Mammary epithelial cell (primary cell): ENCODE measurements at regions of chr20 and their contacts with region 1.

Region 1: DNA sequence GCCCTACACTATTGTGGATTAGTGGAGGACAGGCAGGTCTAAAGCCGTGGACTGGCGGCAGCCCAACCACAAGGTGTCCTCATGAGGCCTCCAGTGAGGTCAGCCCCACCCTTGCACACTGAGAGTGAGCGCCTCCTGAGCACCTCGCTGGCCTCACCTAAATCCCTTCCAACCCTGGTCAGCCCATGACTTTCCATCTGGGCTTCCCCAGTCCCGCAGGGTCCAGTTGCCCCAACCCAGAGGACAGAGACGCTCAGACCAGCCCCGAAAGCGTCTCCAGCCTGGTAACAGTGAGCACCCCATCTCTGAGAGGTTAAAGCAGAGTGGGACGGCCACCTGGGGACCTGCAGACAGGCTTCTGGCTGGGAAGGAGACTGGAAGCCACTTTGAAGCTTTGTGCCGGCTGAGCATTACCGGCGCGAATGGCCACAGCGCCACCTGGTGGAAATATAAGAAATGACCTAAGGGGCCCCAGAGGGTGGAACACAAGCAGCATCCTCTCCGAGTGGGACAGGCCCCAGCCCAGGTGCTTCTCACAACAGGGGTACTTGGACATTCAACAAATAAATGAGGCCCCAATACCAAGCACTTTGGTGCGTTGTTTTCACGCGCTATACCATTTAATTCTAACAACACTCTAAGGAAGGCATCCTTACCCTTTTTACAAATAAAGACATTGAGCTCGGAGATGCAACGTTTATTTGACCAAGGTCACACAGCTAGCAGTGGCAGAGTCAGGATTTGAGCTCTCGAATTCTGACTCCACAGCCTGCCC is 65.7 kb upstream of the TOP1 start:
- DNase-seq: peak; percentile 56
- H3K4me3 ChIP-seq: no peak overlapping the region
- H3K27ac ChIP-seq: no peak overlapping the region
- H3K4me1 ChIP-seq: peaks cover 26% of the 10 kb centered on the region
- H3K27me3 ChIP-seq: no peaks in the 10 kb centered on the region
- CTCF ChIP-seq: peak; percentile 69 to 89

Region 2: GRCh38 chr20:39112178-39112743 is 1850.7 kb before region 1 on chr20:
- CTCF ChIA-PET with region 1: no interaction called
- dilution Hi-C with region 1: no loop called
- in situ Hi-C with region 1: no loop called
- intact Hi-C with region 1: loop called (anchors 5 kb)
- DNase-seq: peak; percentile 4
- H3K4me3 ChIP-seq: no peak overlapping the region
- H3K27ac ChIP-seq: no peak overlapping the region
- H3K4me1 ChIP-seq: no peaks in the 10 kb centered on the region
- H3K27me3 ChIP-seq: no peaks in the 10 kb centered on the region
- CTCF ChIP-seq: peak; percentile 52 to 70

Region 3: DNA sequence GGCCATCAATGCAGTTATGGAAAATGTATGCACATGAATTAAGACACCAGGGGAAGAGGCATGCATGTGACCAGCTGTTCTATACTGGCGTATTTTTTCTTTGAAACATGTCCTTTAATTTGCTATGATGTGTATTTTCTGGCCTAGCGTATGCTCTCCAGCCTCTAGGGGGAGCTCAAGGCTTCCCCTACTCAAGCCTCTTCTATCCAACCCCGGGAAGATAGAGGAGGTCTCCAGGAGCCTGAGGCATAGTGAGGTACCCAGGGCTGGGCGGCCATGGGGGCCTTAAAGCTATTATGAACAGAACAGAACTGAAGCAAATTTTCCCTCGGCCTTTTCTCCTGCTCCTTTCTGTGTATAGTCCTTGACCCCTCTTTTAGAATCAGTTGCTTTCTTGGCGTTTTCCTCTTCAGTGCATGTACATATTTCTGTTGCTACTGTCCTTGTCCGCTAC is 802.8 kb before region 1 on chr20:
- CTCF ChIA-PET with region 1: no interaction called
- dilution Hi-C with region 1: no loop called
- in situ Hi-C with region 1: no loop called
- intact Hi-C with region 1: loop called (anchors 1 kb)
- DNase-seq: peak; percentile 41
- H3K4me3 ChIP-seq: no peak overlapping the region
- H3K27ac ChIP-seq: no peak overlapping the region
- H3K4me1 ChIP-seq: no peaks in the 10 kb centered on the region
- H3K27me3 ChIP-seq: no peaks in the 10 kb centered on the region
- CTCF ChIP-seq: peak; percentile 90 to 93

Region 4: DNA sequence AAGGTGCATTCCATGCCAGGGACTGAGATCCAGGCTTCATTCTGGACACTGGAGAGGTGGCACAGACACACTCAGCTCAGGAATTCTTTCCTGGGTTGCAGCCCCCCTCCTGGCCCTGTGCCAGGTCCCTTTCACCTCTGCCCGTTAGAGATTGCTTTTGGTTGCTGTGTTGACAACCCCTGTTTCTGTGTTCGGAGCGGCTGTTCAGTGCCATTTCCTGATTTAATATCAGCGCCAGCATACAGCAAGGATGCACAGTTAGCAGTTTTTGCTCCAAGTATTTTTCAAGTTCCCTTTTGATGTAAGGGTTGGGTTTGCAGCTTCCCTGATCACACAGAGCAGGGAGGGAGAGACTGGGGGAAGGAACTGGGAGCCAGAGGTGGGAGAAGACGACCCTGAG is 265.4 kb before region 1 on chr20:
- CTCF ChIA-PET with region 1: no interaction called
- dilution Hi-C with region 1: no loop called
- in situ Hi-C with region 1: no loop called
- intact Hi-C with region 1: loop called (anchors 5 kb)
- DNase-seq: no peak
- H3K4me3 ChIP-seq: no peak overlapping the region
- H3K27ac ChIP-seq: no peak overlapping the region
- H3K4me1 ChIP-seq: no peaks in the 10 kb centered on the region
- H3K27me3 ChIP-seq: peaks cover under 1% of the 10 kb centered on the region
- CTCF ChIP-seq: no peak

Region 5: GRCh38 chr20:40797425-40797824 is 165.5 kb before region 1 on chr20:
- CTCF ChIA-PET with region 1: interaction called, 13 read pairs
- dilution Hi-C with region 1: no loop called
- in situ Hi-C with region 1: no loop called
- intact Hi-C with region 1: loop called (anchors 1 kb)
- DNase-seq: peak; percentile 12
- H3K4me3 ChIP-seq: no peak overlapping the region
- H3K27ac ChIP-seq: no peak overlapping the region
- H3K4me1 ChIP-seq: no peaks in the 10 kb centered on the region
- H3K27me3 ChIP-seq: peaks cover 5% of the 10 kb centered on the region
- CTCF ChIP-seq: peak; percentile 44 to 54

Region 6: GRCh38 chr20:41078329-41078728 is 115.4 kb after region 1 on chr20:
- CTCF ChIA-PET with region 1: no interaction called
- dilution Hi-C with region 1: no loop called
- in situ Hi-C with region 1: no loop called
- intact Hi-C with region 1: loop called (anchors 5 kb)
- DNase-seq: peak; percentile 27
- H3K4me3 ChIP-seq: no peak overlapping the region
- H3K27ac ChIP-seq: no peak overlapping the region
- H3K4me1 ChIP-seq: peaks cover 13% of the 10 kb centered on the region
- H3K27me3 ChIP-seq: no peaks in the 10 kb centered on the region
- CTCF ChIP-seq: peak; percentile 30 to 54

Region 7: GRCh38 chr20:41411391-41411847 is 448.5 kb after region 1 on chr20:
- CTCF ChIA-PET with region 1: no interaction called
- dilution Hi-C with region 1: no loop called
- in situ Hi-C with region 1: no loop called
- intact Hi-C with region 1: loop called (anchors 5 kb)
- DNase-seq: peak; percentile 5
- H3K4me3 ChIP-seq: no peak overlapping the region
- H3K27ac ChIP-seq: no peak overlapping the region
- H3K4me1 ChIP-seq: no peaks in the 10 kb centered on the region
- H3K27me3 ChIP-seq: no peaks in the 10 kb centered on the region
- CTCF ChIP-seq: peak; percentile 26 to 39